Mammary epithelial cell (primary cell): ENCODE measurements at regions of chr4 and their contacts with region 1.

Region 1: GRCh38 chr4:38759113-38759789 is 23.5 kb downstream of the TLR10 start:
- DNase-seq: peak; percentile 24
- H3K4me3 ChIP-seq: no peak overlapping the region
- H3K27ac ChIP-seq: no peak overlapping the region
- H3K4me1 ChIP-seq: no peaks in the 10 kb centered on the region
- H3K27me3 ChIP-seq: no peaks in the 10 kb centered on the region
- CTCF ChIP-seq: peak; percentile 55 to 71

Region 2: DNA sequence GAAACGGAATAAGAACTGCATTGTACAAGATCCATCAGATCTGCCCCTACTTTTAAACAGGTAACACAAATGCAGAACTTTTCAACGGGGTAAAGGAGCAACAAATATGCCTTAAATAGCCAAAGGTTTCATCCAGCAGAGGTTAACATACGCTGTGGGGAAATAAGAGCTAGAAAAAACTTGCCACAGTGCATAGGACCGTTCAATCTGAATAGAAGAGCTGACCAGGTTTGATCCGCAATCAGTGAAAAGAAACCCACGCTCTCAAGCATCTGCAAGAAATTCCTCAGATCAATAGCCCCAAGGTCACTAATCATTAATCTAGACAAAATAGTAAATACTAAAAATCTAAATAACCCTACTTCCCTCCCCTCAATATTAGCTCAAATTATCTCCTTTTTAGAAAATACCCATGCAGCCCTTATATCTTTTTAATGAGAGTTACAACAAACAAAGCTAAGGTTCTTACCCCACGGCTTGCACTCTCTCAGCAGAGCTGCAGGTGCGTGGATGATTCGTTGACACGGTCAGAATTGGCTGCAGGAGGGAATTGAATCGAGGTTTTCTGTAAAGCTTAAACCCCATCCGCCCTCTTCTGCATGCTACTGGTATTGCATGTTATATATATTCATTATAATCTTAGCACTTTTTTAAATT is 23.3 kb after region 1 on chr4 and contains the start of gene TLR10:
- CTCF ChIA-PET with region 1: interaction called, 30 read pairs
- dilution Hi-C with region 1: no loop called
- in situ Hi-C with region 1: no loop called
- intact Hi-C with region 1: loop called (anchors 1 kb)
- DNase-seq: peak; percentile 30
- H3K4me3 ChIP-seq: no peak within 1 kb of the TSS
- H3K27ac ChIP-seq: no peak within 1 kb of the TSS
- H3K4me1 ChIP-seq: no peaks in the 10 kb centered on the region
- H3K27me3 ChIP-seq: no peaks in the 10 kb centered on the region
- CTCF ChIP-seq: peak; percentile 53 to 66
- total RNA-seq, gene TLR10: not detected

Region 3: DNA sequence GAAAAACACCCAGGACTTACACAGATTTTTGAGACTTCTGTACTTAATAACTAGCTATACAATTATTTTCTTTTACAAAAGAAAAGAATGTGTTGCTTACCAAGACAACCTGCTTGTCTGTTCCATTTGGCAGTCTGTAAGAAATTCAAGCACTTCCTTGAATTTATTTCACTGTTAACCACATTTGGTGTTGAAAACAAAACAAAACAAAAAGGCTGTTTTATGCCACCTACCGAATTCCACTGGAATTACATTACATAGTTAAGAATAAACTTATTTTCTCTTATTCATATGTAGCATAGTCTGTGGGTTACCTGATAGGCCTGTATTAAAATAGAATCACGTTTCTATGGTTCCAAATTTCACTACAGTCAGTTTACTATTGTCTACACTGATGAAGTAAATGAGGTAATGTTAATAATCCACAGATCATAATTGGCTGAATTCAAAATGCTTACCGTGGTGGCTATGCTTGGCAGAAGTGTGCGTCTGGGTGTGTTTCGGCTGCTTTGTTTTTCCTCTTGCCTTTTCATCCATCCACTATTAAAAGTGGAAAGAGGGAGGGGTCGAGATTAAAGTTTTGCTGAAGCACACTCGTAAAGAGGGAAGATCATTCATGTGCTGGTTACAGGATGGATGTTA is 45.5 kb after region 1 on chr4 and contains the start of gene TLR1:
- CTCF ChIA-PET with region 1: no interaction called
- dilution Hi-C with region 1: no loop called
- in situ Hi-C with region 1: no loop called
- intact Hi-C with region 1: loop called (anchors 1 kb)
- DNase-seq: peak; percentile 43
- H3K4me3 ChIP-seq: peak within 1 kb of the TSS in 1 of 3 experiments; percentile 11
- H3K27ac ChIP-seq: peak within 1 kb of the TSS; percentile 47
- H3K4me1 ChIP-seq: no peaks in the 10 kb centered on the region
- H3K27me3 ChIP-seq: no peaks in the 10 kb centered on the region
- CTCF ChIP-seq: peak; percentile 57 to 58
- total RNA-seq, gene TLR1: 0.49 to 3.7 TPM

Region 4: GRCh38 chr4:38846015-38846414 is 86.8 kb after region 1 on chr4:
- CTCF ChIA-PET with region 1: no interaction called
- dilution Hi-C with region 1: no loop called
- in situ Hi-C with region 1: no loop called
- intact Hi-C with region 1: no loop called
- DNase-seq: no peak
- H3K4me3 ChIP-seq: no peak overlapping the region
- H3K27ac ChIP-seq: no peak overlapping the region
- H3K4me1 ChIP-seq: no peaks in the 10 kb centered on the region
- H3K27me3 ChIP-seq: no peaks in the 10 kb centered on the region
- CTCF ChIP-seq: no peak

Region 5: GRCh38 chr4:38856524-38857337 is 97.5 kb after region 1 on chr4 and contains the start of gene TLR6:
- CTCF ChIA-PET with region 1: interaction called, 4 read pairs
- dilution Hi-C with region 1: no loop called
- in situ Hi-C with region 1: loop called in 1 of 2 experiments (anchors 10 kb)
- intact Hi-C with region 1: loop called (anchors 1 kb)
- DNase-seq: peak; percentile 78
- H3K4me3 ChIP-seq: peak within 1 kb of the TSS in 2 of 3 experiments; percentile 37 to 43
- H3K27ac ChIP-seq: peak within 1 kb of the TSS; percentile 86
- H3K4me1 ChIP-seq: peaks cover 20% of the 10 kb centered on the region
- H3K27me3 ChIP-seq: no peaks in the 10 kb centered on the region
- CTCF ChIP-seq: peak; percentile 69 to 70
- total RNA-seq, gene TLR6: 5.8 to 6.7 TPM

Region 6: GRCh38 chr4:38867478-38868058 is 108.3 kb after region 1 on chr4 and contains the start of gene FAM114A1:
- CTCF ChIA-PET with region 1: no interaction called
- dilution Hi-C with region 1: no loop called
- in situ Hi-C with region 1: loop called in 1 of 2 experiments (anchors 10 kb)
- intact Hi-C with region 1: no loop called
- DNase-seq: peak; percentile 70
- H3K4me3 ChIP-seq: peak within 1 kb of the TSS; percentile 57 to 91 (median 84)
- H3K27ac ChIP-seq: peak within 1 kb of the TSS; percentile 65
- H3K4me1 ChIP-seq: peaks cover 18% of the 10 kb centered on the region
- H3K27me3 ChIP-seq: no peaks in the 10 kb centered on the region
- CTCF ChIP-seq: no peak
- total RNA-seq, gene FAM114A1: 69.0 to 107 TPM

Region 7: GRCh38 chr4:38902695-38903094 is 143.4 kb after region 1 on chr4:
- CTCF ChIA-PET with region 1: no interaction called
- dilution Hi-C with region 1: no loop called
- in situ Hi-C with region 1: no loop called
- intact Hi-C with region 1: loop called (anchors 1 kb)
- DNase-seq: peak; percentile 17
- H3K4me3 ChIP-seq: no peak overlapping the region
- H3K27ac ChIP-seq: no peak overlapping the region
- H3K4me1 ChIP-seq: no peaks in the 10 kb centered on the region
- H3K27me3 ChIP-seq: no peaks in the 10 kb centered on the region
- CTCF ChIP-seq: peak; percentile 7 to 30

Region 8: GRCh38 chr4:39134683-39135319 is 375.6 kb after region 1 on chr4:
- CTCF ChIA-PET with region 1: no interaction called
- dilution Hi-C with region 1: no loop called
- in situ Hi-C with region 1: loop called in 1 of 2 experiments (anchors 10 kb)
- intact Hi-C with region 1: loop called (anchors 1 kb)
- DNase-seq: no peak
- H3K4me3 ChIP-seq: no peak overlapping the region
- H3K27ac ChIP-seq: no peak overlapping the region
- H3K4me1 ChIP-seq: no peaks in the 10 kb centered on the region
- H3K27me3 ChIP-seq: no peaks in the 10 kb centered on the region
- CTCF ChIP-seq: no peak

Region 9: DNA sequence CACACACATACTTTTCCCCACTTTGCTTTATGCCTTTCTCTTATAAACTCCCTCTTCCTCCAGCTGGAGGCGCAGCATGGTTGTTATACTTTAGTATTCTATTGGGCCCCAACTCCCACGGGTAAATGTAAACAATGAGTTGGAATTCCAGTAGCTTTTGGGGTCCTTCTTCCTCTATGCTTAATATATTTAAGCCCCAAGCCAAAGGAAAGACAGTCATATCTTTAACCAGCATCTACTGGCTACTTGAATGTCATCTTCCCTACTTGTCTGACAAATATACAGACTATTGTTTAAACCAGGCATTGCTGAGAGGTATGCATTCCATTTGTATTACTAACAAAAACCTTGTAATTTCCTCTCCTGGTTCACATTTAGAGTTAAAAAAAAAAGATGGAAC is 496.0 kb after region 1 on chr4:
- CTCF ChIA-PET with region 1: no interaction called
- dilution Hi-C with region 1: no loop called
- in situ Hi-C with region 1: no loop called
- intact Hi-C with region 1: no loop called
- DNase-seq: peak; percentile 60
- H3K4me3 ChIP-seq: no peak overlapping the region
- H3K27ac ChIP-seq: no peak overlapping the region
- H3K4me1 ChIP-seq: peaks cover 17% of the 10 kb centered on the region
- H3K27me3 ChIP-seq: no peaks in the 10 kb centered on the region
- CTCF ChIP-seq: peak in 1 of 2 donors; percentile 21